Endothelial cell of umbilical vein (primary cell): ENCODE measurements at regions of chr7 and their contacts with region 1.

Region 1: DNA sequence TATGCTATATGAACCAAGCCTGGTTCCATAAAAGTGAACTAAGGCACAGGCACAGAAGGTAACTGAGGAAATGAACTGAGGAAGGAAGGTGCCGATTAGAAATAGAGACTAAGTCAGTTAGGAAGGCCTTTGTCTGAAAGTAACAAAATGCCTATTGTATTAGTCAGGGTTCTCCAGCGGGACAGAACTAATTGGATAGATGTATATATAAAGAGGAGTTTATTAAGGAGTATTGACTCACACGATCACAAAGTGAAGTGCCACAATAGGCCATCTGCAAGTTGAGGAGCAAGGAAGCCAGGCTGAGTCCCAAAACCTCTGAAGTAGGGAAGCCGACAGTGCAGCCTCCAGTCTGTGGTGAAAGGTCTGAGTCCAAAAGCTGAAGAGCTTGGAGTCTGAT is 13.9 kb upstream of the PLXNA4 start:
- DNase-seq: peak; percentile 68
- H3K4me3 ChIP-seq: no peak overlapping the region
- H3K27ac ChIP-seq: no peak overlapping the region
- H3K4me1 ChIP-seq: peaks cover 12% of the 10 kb centered on the region
- H3K27me3 ChIP-seq: peaks cover 8% of the 10 kb centered on the region in 2 experiments
- CTCF ChIP-seq: no peak
- POLR2A ChIP-seq: no peak

Region 2: DNA sequence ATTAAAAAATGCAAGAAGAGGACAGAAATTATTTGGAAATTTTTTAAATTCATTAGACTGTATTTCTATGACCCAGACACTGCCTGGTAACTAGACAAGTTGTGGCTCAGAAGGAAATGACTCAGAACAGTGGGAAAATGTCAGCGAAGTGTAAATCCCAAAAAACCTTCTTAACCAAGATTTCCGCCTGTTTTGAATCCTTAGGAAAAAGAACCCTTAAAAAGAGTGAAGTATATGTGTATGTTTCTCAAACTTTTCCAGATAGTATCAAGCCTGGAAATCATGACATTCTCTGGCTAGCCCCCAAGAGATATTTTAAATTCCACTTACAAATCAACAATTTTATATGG is 28.8 kb after region 1 on chr7:
- CTCF ChIA-PET with region 1: interaction called, 3 read pairs
- POLR2A ChIA-PET with region 1: no interaction called
- dilution Hi-C with region 1: no loop called
- intact Hi-C with region 1: loop called (anchors 2 kb)
- DNase-seq: peak; percentile 86
- H3K4me3 ChIP-seq: no peak overlapping the region
- H3K27ac ChIP-seq: peak overlapping the region; percentile 87
- H3K4me1 ChIP-seq: peaks cover 20% of the 10 kb centered on the region
- H3K27me3 ChIP-seq: peaks cover 0 to 4% of the 10 kb centered on the region in 2 experiments
- CTCF ChIP-seq: no peak
- POLR2A ChIP-seq: no peak

Region 3: DNA sequence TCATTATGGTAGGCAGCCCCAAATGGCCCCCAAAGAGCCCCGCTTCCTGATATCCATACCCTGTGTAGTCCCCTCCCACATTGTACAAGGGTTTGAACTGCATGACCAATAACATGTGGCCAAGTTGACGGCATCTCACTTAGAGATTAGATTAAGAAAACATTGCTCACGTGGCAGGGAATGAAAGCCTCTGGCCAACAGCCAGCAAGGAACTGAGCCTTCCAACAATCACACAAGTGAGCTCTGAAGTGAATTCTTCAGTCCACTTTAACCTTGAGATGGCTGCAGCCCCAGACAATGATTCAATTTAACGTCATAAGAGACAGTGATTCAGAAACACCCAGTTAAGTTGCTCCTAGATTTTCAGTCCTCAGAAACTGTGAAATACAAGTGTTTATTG is 152.0 kb after region 1 on chr7:
- CTCF ChIA-PET with region 1: no interaction called
- POLR2A ChIA-PET with region 1: no interaction called
- dilution Hi-C with region 1: no loop called
- intact Hi-C with region 1: no loop called
- DNase-seq: peak; percentile 83
- H3K4me3 ChIP-seq: no peak overlapping the region
- H3K27ac ChIP-seq: no peak overlapping the region
- H3K4me1 ChIP-seq: no peaks in the 10 kb centered on the region
- H3K27me3 ChIP-seq: no peaks in the 10 kb centered on the region
- CTCF ChIP-seq: no peak
- POLR2A ChIP-seq: no peak